ENCODE measurements at regions of chr4 and their contacts with region 1.

Region 1: GRCh38 chr4:70749313-70749712 is 27.5 kb downstream of the RUFY3 start:
- DNase-seq: peak; percentile 7
- H3K4me3 ChIP-seq: no peak overlapping the region
- H3K27ac ChIP-seq: no peak overlapping the region
- H3K4me1 ChIP-seq: no peaks in the 10 kb centered on the region
- H3K27me3 ChIP-seq: no peaks in the 10 kb centered on the region
- CTCF ChIP-seq: no peak

Region 2: GRCh38 chr4:70818173-70818855 is 69.0 kb after region 1 on chr4:
- CTCF ChIA-PET with region 1: no interaction called
- dilution Hi-C with region 1: loop called (anchors 5 kb)
- in situ Hi-C with region 1: no loop called
- intact Hi-C with region 1: no loop called
- DNase-seq: no peak
- H3K4me3 ChIP-seq: no peak overlapping the region
- H3K27ac ChIP-seq: no peak overlapping the region
- H3K4me1 ChIP-seq: no peaks in the 10 kb centered on the region
- H3K27me3 ChIP-seq: no peaks in the 10 kb centered on the region
- CTCF ChIP-seq: no peak

Region 3: GRCh38 chr4:71923070-71923469 is 1173.8 kb after region 1 on chr4:
- CTCF ChIA-PET with region 1: no interaction called
- dilution Hi-C with region 1: no loop called
- in situ Hi-C with region 1: no loop called
- intact Hi-C with region 1: no loop called
- DNase-seq: no peak
- H3K4me3 ChIP-seq: no peak overlapping the region
- H3K27ac ChIP-seq: no peak overlapping the region
- H3K4me1 ChIP-seq: no peaks in the 10 kb centered on the region
- H3K27me3 ChIP-seq: no peaks in the 10 kb centered on the region
- CTCF ChIP-seq: no peak

Measured in mammary epithelial cell (primary cell).